ENCODE measurements at regions of chr6 and their contacts with region 1.

Region 1: DNA sequence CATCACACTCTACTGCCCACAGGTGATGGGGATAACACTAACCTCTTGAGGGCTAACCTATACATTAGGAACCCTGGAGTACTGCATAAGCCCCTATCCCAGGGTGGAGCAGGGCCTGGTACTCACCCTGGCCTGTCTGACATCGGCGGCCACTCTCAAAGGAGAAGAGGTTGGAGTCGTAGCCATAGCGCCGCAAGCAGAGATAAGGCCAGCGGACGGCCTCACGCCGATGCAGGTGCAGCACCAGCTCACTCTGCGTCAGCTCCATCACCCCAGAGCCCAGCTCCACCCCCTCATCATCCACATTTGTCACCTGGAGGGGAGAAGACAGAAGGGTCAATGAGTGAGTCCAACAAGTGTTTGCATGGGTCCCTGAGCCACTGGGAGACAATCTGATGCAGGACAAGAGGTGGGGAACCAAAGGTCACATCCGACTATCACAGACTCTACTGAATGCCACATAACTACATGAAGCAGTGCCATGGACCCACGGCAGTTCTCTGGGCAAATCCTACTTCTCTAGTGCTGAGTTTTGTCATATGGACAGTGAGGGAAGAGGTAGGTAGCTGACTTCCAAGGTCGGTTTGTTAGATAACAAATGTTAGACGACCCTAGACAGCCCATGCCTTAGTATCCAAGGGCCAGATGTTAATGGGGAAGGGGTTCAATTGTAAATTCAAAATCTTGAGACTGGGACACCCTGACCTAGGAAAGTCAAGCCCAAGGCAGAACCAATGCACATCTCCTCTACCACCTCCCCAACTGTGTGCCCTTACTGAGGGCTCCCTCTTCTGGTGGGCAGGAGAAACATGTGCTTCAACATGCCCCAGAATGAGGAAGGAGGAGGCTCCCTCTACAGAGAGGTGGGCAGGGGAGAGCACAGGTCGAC is 4.2 kb downstream of the FRS3 start:
- DNase-seq: peak; percentile 38 to 57
- H3K4me3 ChIP-seq: no peak overlapping the region
- H3K27ac ChIP-seq: no peak overlapping the region
- H3K4me1 ChIP-seq: peaks cover 0 to 5% (median 3%) of the 10 kb centered on the region in 4 experiments; a peak in 1 of 7 replicates
- H3K27me3 ChIP-seq: no peaks in the 10 kb centered on the region; a peak in 1 of 7 replicates
- CTCF ChIP-seq: peak; percentile 96 to 98 (median 98)
- EP300 ChIP-seq: no peak
- POLR2A ChIP-seq: no peak
- RAD21 ChIP-seq: peak; percentile 87 to 92

Region 2: DNA sequence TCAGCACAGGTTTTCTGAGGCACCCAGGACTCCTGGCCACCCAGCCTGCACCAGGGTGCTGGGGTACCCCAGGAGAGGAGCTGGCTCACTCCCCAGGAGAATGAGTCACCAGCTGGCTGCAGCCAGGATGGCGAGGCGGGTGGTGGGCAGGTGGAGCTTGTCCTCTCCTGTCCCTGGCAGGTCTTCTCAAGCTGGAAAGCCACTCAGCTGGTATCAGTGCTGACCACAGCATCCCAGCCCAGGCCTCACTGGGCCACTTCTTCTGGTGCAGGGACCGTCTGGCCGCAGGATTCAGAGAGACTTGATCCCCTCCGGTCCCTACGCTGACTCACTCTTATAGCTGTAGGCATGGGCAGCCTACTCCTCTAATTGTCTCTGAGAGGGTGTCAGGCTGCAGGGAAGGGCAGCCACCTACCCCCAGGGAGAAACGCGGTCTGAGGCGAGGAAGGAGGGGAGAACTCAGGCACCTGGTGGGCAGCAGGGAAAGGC is 62.3 kb before region 1 on chr6:
- CTCF ChIA-PET with region 1: interaction called, 11 read pairs
- POLR2A ChIA-PET with region 1: no interaction called
- DNase-seq: no peak
- H3K4me3 ChIP-seq: no peak overlapping the region
- H3K27ac ChIP-seq: no peak overlapping the region
- H3K4me1 ChIP-seq: peaks cover 0 to 3% (median 0%) of the 10 kb centered on the region in 4 experiments; a peak in 1 of 7 replicates
- H3K27me3 ChIP-seq: no peaks in the 10 kb centered on the region; a peak in 1 of 7 replicates
- CTCF ChIP-seq: no peak
- EP300 ChIP-seq: no peak
- POLR2A ChIP-seq: no peak
- RAD21 ChIP-seq: no peak

Region 3: GRCh38 chr6:41735427-41736356 is 39.8 kb before region 1 on chr6 and contains the start of gene TFEB:
- CTCF ChIA-PET with region 1: interaction called, 21 read pairs
- POLR2A ChIA-PET with region 1: interaction called, 3 read pairs
- DNase-seq: peak in 1 of 2 experiments; percentile 98
- H3K4me3 ChIP-seq: peak within 1 kb of the TSS; percentile 36 to 74 (median 54)
- H3K27ac ChIP-seq: no peak within 1 kb of the TSS
- H3K4me1 ChIP-seq: peaks cover 3 to 27% (median 14%) of the 10 kb centered on the region in 4 experiments
- H3K27me3 ChIP-seq: peaks cover 0 to 8% (median 5%) of the 10 kb centered on the region in 4 experiments; a peak in 3 of 7 replicates
- CTCF ChIP-seq: peak in 2 of 3 experiments; percentile 89 to 92; a peak in 3 of 4 replicates
- EP300 ChIP-seq: no peak
- POLR2A ChIP-seq: no peak
- RAD21 ChIP-seq: peak; percentile 36 to 67
- total RNA-seq, gene TFEB: 2.3 and 2.4 TPM in 2 replicates

Region 4: GRCh38 chr6:41747256-41748101 is 28.1 kb before region 1 on chr6 and contains the start of gene PGC:
- CTCF ChIA-PET with region 1: interaction called, 21 read pairs
- POLR2A ChIA-PET with region 1: no interaction called
- DNase-seq: no peak
- H3K4me3 ChIP-seq: no peak within 1 kb of the TSS
- H3K27ac ChIP-seq: no peak within 1 kb of the TSS
- H3K4me1 ChIP-seq: peaks cover 0 to 3% (median 0%) of the 10 kb centered on the region in 4 experiments; a peak in 2 of 7 replicates
- H3K27me3 ChIP-seq: no peaks in the 10 kb centered on the region
- CTCF ChIP-seq: no peak
- EP300 ChIP-seq: no peak
- POLR2A ChIP-seq: no peak
- RAD21 ChIP-seq: no peak
- total RNA-seq, gene PGC: not detected in 2 replicates

Region 5: DNA sequence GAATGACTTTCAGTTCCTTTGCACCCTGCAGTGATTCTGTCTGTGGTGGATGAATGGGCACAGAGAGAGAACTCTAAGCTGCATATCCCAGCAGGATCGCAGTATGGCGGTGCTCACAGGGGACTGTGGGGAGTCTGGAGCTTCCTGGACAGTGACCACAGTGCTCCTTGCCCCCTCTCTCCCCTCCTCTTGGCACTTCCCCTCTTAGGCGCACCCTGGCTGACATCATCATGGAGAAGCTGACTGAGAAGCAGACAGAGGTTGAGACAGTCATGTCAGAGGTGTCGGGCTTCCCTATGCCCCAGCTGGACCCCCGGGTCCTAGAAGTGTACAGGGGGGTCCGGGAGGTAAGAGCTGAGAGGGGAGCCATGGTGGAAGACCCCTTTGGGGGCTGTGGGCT is 154.4 kb after region 1 on chr6:
- CTCF ChIA-PET with region 1: no interaction called
- POLR2A ChIA-PET with region 1: no interaction called
- DNase-seq: no peak
- H3K4me3 ChIP-seq: no peak overlapping the region
- H3K27ac ChIP-seq: no peak overlapping the region
- H3K4me1 ChIP-seq: no peaks in the 10 kb centered on the region
- H3K27me3 ChIP-seq: no peaks in the 10 kb centered on the region
- CTCF ChIP-seq: no peak
- EP300 ChIP-seq: no peak
- POLR2A ChIP-seq: no peak; a peak in 1 of 3 replicates
- RAD21 ChIP-seq: no peak

Measured in H1 (cell line).